Activated B cell treated with CpG ODN at 0.5 μM for 24 hours (primary cell): ENCODE measurements at regions of chr12 and their contacts with region 1.

Region 1: GRCh38 chr12:51047655-51048540 is at the start of gene LETMD1:
- DNase-seq: peak; percentile 81
- ATAC-seq: peak; percentile 96
- H3K4me3 Mint-ChIP-seq: peak within 1 kb of the TSS; percentile 92
- H3K27ac Mint-ChIP-seq: peak within 1 kb of the TSS; percentile 87
- H3K4me1 Mint-ChIP-seq: peaks cover 30% of the 10 kb centered on the region
- H3K27me3 Mint-ChIP-seq: no peaks in the 10 kb centered on the region
- CTCF ChIP-seq: peak; percentile 64
- total RNA-seq, gene LETMD1: 82.8 and 92.0 TPM in 2 replicates

Region 2: GRCh38 chr12:50825372-50825838 is 222.5 kb before region 1 on chr12:
- CTCF ChIA-PET with region 1: no interaction called
- POLR2A ChIA-PET with region 1: no interaction called
- intact Hi-C with region 1: loop called (anchors 1 kb)
- DNase-seq: no peak
- ATAC-seq: peak; percentile 80
- H3K4me3 Mint-ChIP-seq: no peak overlapping the region
- H3K27ac Mint-ChIP-seq: no peak overlapping the region
- H3K4me1 Mint-ChIP-seq: peaks cover 6% of the 10 kb centered on the region
- H3K27me3 Mint-ChIP-seq: no peaks in the 10 kb centered on the region
- CTCF ChIP-seq: no peak

Region 3: DNA sequence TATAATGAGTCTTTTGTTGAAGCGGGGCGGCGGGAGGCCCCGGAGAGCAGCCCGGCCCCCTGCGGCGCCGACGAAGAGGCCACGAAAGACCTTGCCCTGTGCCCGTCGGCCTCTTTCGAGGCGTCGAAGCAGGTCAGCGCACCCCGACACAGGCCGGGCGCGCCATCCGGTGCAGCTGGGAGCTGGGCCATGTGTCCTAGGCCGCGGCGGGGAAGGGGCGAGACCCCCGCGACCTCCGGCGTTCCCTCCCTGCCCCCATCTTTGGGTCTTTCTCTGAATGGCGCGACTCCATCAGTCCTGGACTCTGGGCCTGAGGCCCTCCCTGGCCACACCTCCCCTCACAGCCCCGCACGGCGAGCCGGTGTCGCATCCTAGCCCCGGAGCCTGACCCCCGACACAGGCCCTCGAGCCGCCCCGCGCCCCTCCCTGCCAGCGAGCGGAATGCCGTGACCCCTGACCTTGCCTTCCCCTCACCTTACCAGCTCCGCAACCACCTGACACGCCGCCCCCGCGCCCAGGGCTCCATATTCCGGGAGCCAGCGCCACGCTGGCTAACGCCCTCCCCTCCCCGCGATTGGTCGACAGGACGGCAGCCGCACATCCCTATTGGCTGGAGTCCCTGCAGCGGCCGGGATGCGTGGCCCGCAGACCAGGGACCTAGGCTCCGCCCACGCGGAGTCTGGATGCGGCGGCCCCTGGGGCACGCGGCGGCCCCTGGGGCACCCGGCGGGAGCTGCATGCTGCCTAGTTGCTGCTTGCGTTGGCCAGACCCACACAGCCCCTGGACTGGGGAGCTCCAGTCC is 21.9 kb before region 1 on chr12 and contains the start of gene SLC11A2:
- CTCF ChIA-PET with region 1: interaction called, 3 read pairs
- POLR2A ChIA-PET with region 1: interaction called, 11 read pairs
- intact Hi-C with region 1: loop called (anchors 1 kb)
- DNase-seq: peak; percentile 86
- ATAC-seq: peak; percentile 98
- H3K4me3 Mint-ChIP-seq: peak within 1 kb of the TSS; percentile 99
- H3K27ac Mint-ChIP-seq: peak within 1 kb of the TSS; percentile 93
- H3K4me1 Mint-ChIP-seq: peaks cover 42% of the 10 kb centered on the region
- H3K27me3 Mint-ChIP-seq: no peaks in the 10 kb centered on the region
- CTCF ChIP-seq: no peak
- total RNA-seq, gene SLC11A2: 32.3 and 44.6 TPM in 2 replicates

Region 4: DNA sequence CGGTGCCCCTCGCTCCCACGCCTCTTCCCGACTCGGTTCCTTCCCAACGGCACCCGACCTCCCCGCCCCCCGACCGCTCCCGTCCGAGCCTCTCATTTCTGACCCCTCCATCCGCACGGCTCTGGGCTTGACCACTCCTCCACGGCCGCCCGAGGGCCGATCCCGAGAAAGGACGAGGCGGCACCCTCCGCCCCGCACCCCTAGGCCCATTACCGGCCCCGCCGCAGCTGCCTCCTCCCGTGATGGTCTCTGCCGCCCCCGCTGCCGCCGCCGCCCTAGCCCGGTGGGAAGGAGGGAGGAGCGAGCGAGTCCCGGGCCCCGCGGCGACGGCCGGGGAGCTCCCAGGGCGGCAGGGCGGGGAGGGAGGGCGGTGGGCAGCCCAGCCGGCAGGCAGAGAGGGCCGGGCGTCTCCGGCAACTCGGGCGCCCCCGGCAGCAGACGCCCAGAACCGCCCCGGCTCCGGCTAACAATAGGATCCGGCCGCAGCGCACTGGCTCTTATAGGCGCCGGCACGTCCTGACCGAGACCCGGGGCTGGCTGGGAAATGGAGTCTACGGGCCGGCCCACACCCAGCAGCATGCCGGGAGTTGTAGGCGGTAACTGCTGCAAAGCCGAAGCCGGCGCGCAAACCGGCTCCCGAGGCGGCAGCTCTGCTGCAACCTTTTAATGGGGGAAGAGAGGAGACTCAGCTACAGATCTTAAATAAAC is 35.4 kb after region 1 on chr12 and contains the start of gene CSRNP2:
- CTCF ChIA-PET with region 1: no interaction called
- POLR2A ChIA-PET with region 1: interaction called, 7 read pairs
- intact Hi-C with region 1: loop called (anchors 1 kb)
- DNase-seq: peak; percentile 92
- ATAC-seq: peak; percentile 99
- H3K4me3 Mint-ChIP-seq: peak within 1 kb of the TSS; percentile 96
- H3K27ac Mint-ChIP-seq: peak within 1 kb of the TSS; percentile 71
- H3K4me1 Mint-ChIP-seq: peaks cover 20% of the 10 kb centered on the region
- H3K27me3 Mint-ChIP-seq: no peaks in the 10 kb centered on the region
- CTCF ChIP-seq: no peak
- total RNA-seq, gene CSRNP2: 16.9 and 17.7 TPM in 2 replicates

Region 5: GRCh38 chr12:51172515-51173431 is 124.9 kb after region 1 on chr12 and contains the start of gene TFCP2:
- CTCF ChIA-PET with region 1: no interaction called
- POLR2A ChIA-PET with region 1: interaction called, 3 read pairs
- intact Hi-C with region 1: loop called (anchors 2 kb)
- DNase-seq: peak; percentile 84
- ATAC-seq: peak; percentile 98
- H3K4me3 Mint-ChIP-seq: peak within 1 kb of the TSS; percentile 77
- H3K27ac Mint-ChIP-seq: peak within 1 kb of the TSS; percentile 68
- H3K4me1 Mint-ChIP-seq: peaks cover 9% of the 10 kb centered on the region
- H3K27me3 Mint-ChIP-seq: no peaks in the 10 kb centered on the region
- CTCF ChIP-seq: no peak
- total RNA-seq, gene TFCP2: 34.9 and 36.7 TPM in 2 replicates

Region 6: GRCh38 chr12:51293696-51294095 is 245.8 kb after region 1 on chr12:
- CTCF ChIA-PET with region 1: interaction called, 3 read pairs
- POLR2A ChIA-PET with region 1: no interaction called
- intact Hi-C with region 1: loop called (anchors 1 kb)
- DNase-seq: no peak
- ATAC-seq: no peak
- H3K4me3 Mint-ChIP-seq: no peak overlapping the region
- H3K27ac Mint-ChIP-seq: peak overlapping the region; percentile 50
- H3K4me1 Mint-ChIP-seq: peaks cover 20% of the 10 kb centered on the region
- H3K27me3 Mint-ChIP-seq: no peaks in the 10 kb centered on the region
- CTCF ChIP-seq: no peak

Region 7: DNA sequence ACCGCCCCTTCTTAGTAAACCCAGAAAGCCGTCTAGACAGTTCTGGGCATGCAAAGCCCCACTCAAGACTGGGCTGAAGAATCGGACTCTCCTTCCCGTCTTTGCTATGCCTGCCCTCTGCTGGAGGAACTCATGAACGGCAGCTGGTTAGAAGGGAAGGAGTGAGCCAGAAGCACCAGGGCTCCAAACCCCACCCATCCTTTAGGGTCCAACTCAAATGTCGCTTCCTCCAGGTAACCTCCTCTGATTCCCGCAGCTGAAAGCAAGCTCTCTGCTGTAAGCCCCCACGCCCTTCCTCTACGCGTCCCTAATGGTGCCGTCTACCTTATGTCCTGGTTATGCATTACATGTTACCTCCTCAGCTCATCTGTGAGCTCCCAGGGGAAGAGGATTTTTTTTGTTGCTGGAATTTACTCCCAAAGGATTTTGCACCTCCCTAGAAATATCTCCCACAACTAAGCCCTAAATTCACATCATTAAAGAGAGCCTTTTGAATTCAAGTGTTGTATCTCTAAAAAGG is 484.1 kb after region 1 on chr12:
- CTCF ChIA-PET with region 1: no interaction called
- POLR2A ChIA-PET with region 1: no interaction called
- intact Hi-C with region 1: loop called (anchors 1 kb)
- DNase-seq: peak; percentile 56
- ATAC-seq: peak; percentile 97
- H3K4me3 Mint-ChIP-seq: no peak overlapping the region
- H3K27ac Mint-ChIP-seq: no peak overlapping the region
- H3K4me1 Mint-ChIP-seq: peaks cover 11% of the 10 kb centered on the region
- H3K27me3 Mint-ChIP-seq: peaks cover 28% of the 10 kb centered on the region
- CTCF ChIP-seq: peak; percentile 51

Region 8: DNA sequence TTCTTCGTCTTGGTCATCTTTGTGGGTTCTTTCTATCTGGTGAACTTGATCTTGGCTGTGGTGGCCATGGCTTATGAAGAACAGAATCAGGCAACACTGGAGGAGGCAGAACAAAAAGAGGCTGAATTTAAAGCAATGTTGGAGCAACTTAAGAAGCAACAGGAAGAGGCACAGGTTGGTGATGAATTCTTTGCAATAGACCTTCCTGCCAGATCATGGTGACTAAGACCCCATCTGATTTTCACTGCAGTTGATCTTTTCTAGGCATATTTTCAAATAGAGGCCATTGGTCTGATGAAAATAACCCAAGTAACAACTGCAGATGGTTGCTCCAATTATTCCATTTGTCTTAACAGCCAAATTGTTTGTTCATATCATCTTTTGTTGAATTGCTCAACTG is 657.6 kb after region 1 on chr12:
- CTCF ChIA-PET with region 1: no interaction called
- POLR2A ChIA-PET with region 1: no interaction called
- intact Hi-C with region 1: no loop called
- DNase-seq: no peak
- ATAC-seq: no peak
- H3K4me3 Mint-ChIP-seq: no peak overlapping the region
- H3K27ac Mint-ChIP-seq: no peak overlapping the region
- H3K4me1 Mint-ChIP-seq: no peaks in the 10 kb centered on the region
- H3K27me3 Mint-ChIP-seq: peaks cover 3% of the 10 kb centered on the region
- CTCF ChIP-seq: no peak